Vagina (tissue), 2 donors: ENCODE measurements at regions of chr4 and their contacts with region 1.

Region 1: DNA sequence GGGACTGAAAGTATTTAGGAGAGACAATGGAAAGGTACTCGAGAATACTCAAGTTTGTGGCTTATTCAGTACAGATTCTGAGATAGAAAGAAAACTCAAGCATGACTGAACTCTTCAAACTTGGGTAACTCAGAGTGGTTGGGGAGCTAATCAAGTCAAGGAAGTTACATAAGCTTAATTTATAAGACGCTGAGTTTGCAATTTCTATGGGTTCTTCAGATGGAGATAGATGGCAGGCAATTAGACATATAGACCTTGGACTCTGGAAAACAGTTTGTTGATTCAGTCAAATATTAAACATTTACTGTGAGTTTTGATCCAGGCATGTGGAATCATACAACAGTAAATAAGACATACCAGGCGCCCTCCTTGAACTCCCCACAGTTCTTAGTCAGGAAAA is 1749.9 kb upstream of the TENM3 start:
- DNase-seq: no peak
- H3K4me3 ChIP-seq: no peak overlapping the region
- H3K27ac ChIP-seq: no peak overlapping the region
- H3K4me1 ChIP-seq: no peaks in the 10 kb centered on the region
- H3K27me3 ChIP-seq: no peaks in the 10 kb centered on the region
- CTCF ChIP-seq: no peak
- POLR2A ChIP-seq: no peak

Region 2: GRCh38 chr4:180617196-180617595 is 123.9 kb after region 1 on chr4:
- intact Hi-C with region 1: no loop called
- DNase-seq: no peak
- H3K4me3 ChIP-seq: no peak overlapping the region
- H3K27ac ChIP-seq: no peak overlapping the region
- H3K4me1 ChIP-seq: no peaks in the 10 kb centered on the region
- H3K27me3 ChIP-seq: no peaks in the 10 kb centered on the region
- CTCF ChIP-seq: no peak
- POLR2A ChIP-seq: no peak

Region 3: GRCh38 chr4:180828440-180829018 is 335.2 kb after region 1 on chr4:
- intact Hi-C with region 1: loop called (anchors 10 kb)
- DNase-seq: no peak
- H3K4me3 ChIP-seq: no peak overlapping the region
- H3K27ac ChIP-seq: no peak overlapping the region
- H3K4me1 ChIP-seq: peaks cover 8% of the 10 kb centered on the region
- H3K27me3 ChIP-seq: no peaks in the 10 kb centered on the region
- CTCF ChIP-seq: peak in 2 of 3 experiments; percentile 20 to 45
- POLR2A ChIP-seq: no peak